K562 (cell line): ENCODE measurements at regions of chr7 and their contacts with region 1.

Region 1: DNA sequence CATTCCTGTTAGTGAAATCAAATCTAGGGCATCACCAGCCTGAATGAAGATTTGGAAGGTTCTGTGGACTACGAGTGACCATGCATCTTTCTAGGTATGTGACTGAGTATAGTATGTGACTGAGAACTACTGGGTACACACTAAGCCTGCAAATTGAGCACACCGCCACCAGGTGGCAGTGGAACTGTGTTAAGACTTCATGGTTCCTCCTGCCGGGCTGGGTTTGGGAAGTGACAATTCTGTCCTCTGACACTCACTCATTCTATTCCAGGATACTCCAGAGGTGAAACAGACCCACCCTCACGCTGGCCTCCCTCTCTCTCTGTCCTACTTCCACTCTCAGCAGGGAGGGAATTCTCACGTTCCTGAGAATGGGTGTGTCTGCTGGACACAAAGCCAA is 84.0 kb upstream of the TMEM248 start:
- DNase-seq: peak; percentile 34 to 83 (median 38)
- ATAC-seq: peak; percentile 93
- H3K4me3 ChIP-seq: no peak overlapping the region
- H3K27ac ChIP-seq: no peak overlapping the region
- H3K4me1 ChIP-seq: peaks cover 0 to 8% of the 10 kb centered on the region in 2 experiments; a peak in 1 of 5 replicates
- H3K27me3 ChIP-seq: no peaks in the 10 kb centered on the region
- CTCF ChIP-seq: peak; percentile 68 to 78 (median 69)
- EP300 ChIP-seq: no peak
- POLR2A ChIP-seq: no peak
- RAD21 ChIP-seq: peak; percentile 67 to 80

Region 2: DNA sequence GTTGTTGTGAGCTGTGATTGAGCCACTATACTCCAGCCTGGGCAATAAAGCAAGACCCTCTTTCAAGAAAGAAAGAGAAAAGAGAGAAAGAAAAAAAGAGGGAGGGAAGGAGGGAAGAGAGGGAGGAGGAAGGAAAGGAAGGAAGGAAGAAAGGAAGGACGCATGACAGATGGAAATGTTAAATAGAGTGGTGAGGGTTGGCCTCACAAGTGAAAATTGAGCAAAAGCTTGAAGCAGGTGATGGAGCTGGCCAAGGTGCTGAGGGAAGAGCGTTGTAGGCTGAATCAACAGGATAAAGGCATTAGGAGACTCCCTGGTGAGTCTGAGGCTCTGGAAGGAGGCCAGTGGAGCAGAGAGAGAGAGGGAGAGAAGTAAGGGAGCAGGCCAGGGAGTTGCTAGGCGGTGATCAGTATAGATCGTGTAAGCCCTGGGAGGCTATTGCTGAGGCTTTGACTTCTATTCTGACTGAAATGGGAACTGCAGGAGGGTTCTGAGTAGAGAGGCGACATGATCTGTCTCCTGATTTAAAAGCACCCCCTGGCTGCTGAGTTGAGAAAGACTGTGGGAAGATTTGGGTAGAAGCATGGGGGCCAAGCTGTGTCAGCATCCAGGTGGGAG is 57.6 kb after region 1 on chr7:
- CTCF ChIA-PET with region 1: interaction called, 3 read pairs
- POLR2A ChIA-PET with region 1: no interaction called
- in situ Hi-C with region 1: no loop called
- intact Hi-C with region 1: loop called (anchors 1 kb)
- DNase-seq: peak in 1 of 4 experiments; percentile 37
- ATAC-seq: peak; percentile 77
- H3K4me3 ChIP-seq: no peak overlapping the region
- H3K27ac ChIP-seq: no peak overlapping the region
- H3K4me1 ChIP-seq: no peaks in the 10 kb centered on the region
- H3K27me3 ChIP-seq: no peaks in the 10 kb centered on the region
- CTCF ChIP-seq: peak; percentile 47 to 58 (median 52)
- EP300 ChIP-seq: no peak
- POLR2A ChIP-seq: no peak
- RAD21 ChIP-seq: peak; percentile 73 to 76